ENCODE measurements at regions of chr7 and their contacts with region 1.

Region 1: DNA sequence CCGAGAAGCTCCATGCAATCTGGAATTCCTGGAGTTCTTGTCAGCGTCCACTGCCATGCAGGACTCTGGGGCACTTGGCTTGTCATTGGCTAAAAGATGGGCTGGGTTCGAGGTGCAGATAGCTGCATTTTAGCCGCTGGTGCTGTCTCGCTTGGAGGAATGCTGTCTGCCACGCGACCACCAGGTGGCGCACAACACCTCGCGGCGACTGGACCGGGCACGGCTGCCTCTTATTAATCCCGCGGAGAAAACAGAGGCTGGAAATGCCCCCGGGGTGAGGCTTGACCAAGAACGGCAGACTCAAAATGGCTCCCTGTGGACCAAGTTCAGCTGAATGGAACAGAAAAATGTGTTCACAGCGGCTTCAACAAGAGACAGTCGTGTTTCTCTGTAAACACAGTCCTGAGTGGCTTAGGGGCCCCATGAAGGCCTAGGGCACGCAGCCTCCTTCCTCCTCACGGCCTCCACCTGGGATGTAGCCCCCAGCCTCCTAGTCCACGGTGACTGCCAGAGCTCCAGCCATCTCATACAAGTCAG is 46.2 kb downstream of the AOC1 start:
- H3K4me3 ChIP-seq: no peak overlapping the region
- H3K27ac ChIP-seq: no peak overlapping the region
- H3K4me1 ChIP-seq: no peaks in the 10 kb centered on the region
- CTCF ChIP-seq: peak; percentile 85

Region 2: DNA sequence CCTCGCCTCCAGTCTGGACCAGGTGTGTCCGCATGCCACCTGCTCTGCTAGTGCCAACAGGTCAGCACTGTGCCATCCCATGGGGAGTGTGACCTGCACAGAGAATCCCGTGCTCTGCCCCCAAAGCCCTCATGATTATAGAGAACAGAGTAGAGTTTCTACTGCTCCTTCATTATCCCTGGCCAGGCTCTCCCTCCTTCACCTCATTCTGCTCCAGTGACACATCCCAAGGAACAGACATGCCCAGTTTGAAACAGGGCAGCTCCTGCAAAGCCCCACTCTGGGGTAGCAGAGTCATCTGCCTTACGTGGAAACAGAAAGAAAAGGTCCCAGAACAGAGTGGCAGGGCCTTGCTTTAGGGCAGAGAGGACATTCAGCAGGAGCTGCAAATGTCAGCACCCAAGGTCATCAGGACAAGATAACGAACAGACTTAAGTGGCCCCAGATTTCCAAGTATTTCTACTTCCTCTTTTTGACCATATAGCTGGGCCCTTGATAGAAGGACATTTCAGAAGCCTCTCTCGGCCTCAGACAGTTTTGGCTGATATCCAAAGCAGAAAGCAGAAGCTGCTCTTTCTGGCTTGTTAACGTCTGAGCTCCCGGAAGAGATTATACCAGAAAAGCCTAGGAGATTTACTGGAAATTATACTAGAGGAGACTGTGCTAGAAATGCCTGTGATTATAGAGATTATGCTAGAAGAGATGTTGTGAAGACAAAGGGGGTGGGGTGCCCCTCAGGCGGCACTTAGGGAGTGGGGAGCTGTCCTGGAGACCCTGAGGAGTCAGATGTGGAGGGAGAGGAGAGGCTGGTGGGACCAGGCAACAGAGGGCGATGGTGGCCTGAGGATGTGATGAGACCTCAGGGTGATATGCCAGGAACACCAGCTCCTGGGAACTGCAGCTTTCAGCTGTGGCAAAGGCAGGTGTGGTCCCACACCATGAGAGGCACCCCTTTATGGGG is 110.9 kb before region 1 on chr7:
- CTCF ChIA-PET with region 1: interaction called, 10 read pairs
- POLR2A ChIA-PET with region 1: interaction called, 3 read pairs
- H3K4me3 ChIP-seq: no peak overlapping the region
- H3K27ac ChIP-seq: peak overlapping the region; percentile 34; the same call in 1 of the 2 replicates
- H3K4me1 ChIP-seq: 0 out of 2 replicates have a peak, but pooled peaks cover 3% of the 10 kb centered on the region
- CTCF ChIP-seq: peak; percentile 55; the same call in 1 of the 2 replicates

Region 3: GRCh38 chr7:150876817-150877526 is 21.6 kb before region 1 on chr7:
- CTCF ChIA-PET with region 1: interaction called, 41 read pairs
- POLR2A ChIA-PET with region 1: no interaction called
- H3K4me3 ChIP-seq: peak overlapping the region; percentile 27
- H3K27ac ChIP-seq: no peak overlapping the region
- H3K4me1 ChIP-seq: no peaks in the 10 kb centered on the region
- CTCF ChIP-seq: peak; percentile 56; the same call in 1 of the 2 replicates

Region 4: DNA sequence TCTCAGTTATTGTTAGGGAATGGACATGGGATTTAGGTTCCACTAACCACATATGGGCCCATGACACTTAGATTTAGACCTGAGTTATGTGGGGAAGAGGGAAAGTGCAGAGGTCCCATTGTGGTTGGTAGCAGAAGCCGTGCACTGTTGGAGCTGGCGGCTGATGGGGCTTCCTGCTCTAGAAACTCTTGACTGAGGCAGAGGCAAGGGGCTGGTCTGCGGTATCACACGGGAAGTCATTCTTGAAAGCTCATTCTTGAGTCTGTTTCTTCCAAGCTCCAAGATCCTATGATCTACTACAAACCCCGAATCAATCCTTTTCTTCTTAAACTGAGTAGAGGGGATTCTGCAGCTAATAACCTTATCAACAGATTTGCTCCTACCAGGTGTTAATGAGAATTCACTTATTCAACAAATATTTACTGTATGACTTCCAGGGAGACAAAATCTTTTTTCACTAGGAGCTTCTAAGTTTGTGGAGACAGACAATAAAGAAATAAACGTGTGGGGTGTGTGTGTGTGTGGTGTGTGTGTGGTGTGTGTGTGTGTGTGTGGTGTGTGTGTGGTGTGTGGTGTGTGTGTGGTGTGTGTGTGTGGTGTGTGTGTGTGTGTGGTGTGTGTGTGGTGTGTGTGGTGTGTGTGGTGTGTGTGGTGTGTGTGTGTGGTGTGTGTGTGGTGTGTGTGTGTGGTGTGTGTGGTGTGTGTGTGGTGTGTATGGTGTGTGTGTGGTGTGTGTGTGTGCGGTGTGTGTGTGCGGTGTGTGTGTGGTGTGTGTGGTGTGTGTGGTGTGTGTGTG is 10.9 kb after region 1 on chr7:
- CTCF ChIA-PET with region 1: interaction called, 15 read pairs
- POLR2A ChIA-PET with region 1: no interaction called
- H3K4me3 ChIP-seq: no peak overlapping the region
- H3K27ac ChIP-seq: no peak overlapping the region
- H3K4me1 ChIP-seq: no peaks in the 10 kb centered on the region
- CTCF ChIP-seq: no peak

Region 5: DNA sequence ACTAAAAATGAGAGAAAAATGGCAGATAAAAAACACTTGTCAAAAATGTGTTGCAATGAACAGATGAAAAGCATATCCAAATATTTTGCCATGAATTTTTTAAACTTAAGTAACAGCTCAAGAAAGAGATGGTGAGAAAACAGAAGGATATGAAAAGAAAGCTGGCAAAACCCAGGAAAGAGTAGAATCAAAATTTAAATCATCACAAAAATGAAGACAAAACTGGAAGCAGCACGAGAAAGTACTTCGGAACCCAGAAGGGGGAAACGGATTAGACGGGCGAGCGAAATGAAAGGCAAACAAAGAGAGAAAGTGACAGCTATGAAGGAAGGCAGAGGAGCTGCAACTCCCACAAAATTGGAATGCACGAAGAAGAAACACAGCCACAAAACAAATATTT is 19.4 kb after region 1 on chr7:
- CTCF ChIA-PET with region 1: interaction called, 20 read pairs
- POLR2A ChIA-PET with region 1: no interaction called
- H3K4me3 ChIP-seq: no peak overlapping the region
- H3K27ac ChIP-seq: no peak overlapping the region
- H3K4me1 ChIP-seq: no peaks in the 10 kb centered on the region
- CTCF ChIP-seq: no peak

Region 6: DNA sequence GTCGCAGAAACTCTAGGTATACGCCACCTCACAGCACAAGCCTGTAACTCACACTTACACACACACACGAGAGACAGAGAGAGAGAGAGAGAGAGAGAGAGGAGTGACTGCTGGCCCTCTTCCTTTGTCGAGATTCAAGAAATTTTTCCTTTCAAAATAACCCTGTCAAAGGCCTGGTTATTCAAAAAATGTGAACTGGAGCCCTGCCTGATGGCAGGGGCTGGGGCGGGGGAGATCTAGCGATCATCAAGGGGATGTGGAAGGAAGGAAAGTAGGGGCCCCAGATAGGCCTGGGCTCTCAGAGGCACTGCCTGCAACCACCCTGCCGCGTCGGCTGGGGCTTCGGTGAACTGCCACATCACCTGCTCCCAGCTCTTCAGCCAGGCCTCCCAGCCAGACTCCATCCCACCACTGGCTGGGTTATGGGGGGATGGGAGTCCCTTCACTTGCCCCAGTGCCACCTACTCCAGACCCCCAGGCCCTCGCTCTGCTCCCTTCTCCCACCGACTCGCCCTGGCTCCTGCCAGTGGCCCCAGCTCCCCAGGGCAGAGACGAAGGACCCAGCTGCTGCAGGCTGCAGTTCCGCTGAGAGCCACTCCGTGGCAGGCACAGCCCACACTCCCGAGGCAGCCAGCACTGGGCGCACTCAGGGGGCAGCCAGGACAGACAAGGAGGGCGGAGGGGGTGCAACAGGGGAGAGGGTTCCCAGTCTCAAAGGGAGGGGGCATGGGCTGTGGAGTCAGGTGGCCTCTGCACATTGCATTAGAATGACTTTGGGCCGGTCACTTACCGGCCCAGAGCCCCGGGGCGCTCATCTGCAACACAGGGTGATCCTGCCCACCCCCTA is 64.2 kb after region 1 on chr7:
- CTCF ChIA-PET with region 1: interaction called, 12 read pairs
- POLR2A ChIA-PET with region 1: no interaction called
- H3K4me3 ChIP-seq: no peak overlapping the region
- H3K27ac ChIP-seq: no peak overlapping the region
- H3K4me1 ChIP-seq: no peaks in the 10 kb centered on the region
- CTCF ChIP-seq: peak; percentile 92

Region 7: DNA sequence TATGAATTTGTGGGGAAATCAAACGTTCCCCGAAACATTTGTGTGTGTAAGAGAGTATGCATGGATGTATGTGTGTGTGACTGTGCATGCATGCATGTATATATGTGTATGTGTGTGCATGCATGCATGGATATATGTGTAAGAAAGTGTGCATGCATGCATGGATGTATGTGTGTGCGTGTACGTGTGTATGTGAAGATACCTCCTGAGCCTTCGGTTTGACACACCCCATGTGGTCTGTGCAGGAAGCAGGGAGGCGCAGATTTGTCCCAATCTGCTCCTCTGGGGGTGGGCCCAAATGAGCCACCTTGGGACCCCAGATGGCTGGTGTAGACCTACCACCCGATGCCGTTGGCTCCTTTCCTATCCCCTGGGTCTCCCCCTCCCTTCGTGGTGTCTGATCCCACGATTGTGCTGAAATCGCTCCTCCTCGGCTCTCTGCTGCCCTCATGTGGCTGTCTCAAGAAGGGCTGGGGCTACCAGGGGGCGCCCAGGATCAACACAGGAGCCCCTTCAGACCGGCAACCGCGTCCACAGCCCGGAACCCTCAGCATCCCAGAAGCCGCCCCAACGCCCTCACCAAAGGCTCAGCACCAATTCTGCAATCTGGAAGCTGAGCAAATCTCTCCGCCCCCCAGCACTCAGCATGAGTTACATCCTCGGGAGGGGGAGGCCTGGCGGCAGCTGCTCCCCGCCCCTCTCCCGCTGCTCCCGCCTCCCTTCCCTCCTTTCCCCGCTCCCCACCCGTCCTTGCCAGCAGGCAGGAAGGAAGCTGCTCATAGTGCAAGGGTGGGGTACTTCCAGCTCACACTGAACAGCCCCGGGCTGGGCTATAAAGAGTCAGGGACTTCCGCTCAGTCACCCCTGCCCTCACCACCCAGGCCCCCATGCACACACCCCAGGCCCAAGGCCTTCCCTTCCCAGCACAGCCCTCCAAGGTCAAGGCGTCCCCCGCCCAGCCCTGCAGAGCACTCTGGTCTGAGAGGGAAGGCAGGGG is 90.0 kb after region 1 on chr7:
- CTCF ChIA-PET with region 1: interaction called, 22 read pairs
- POLR2A ChIA-PET with region 1: no interaction called
- H3K4me3 ChIP-seq: no peak overlapping the region
- H3K27ac ChIP-seq: no peak overlapping the region
- H3K4me1 ChIP-seq: no peaks in the 10 kb centered on the region
- CTCF ChIP-seq: peak; percentile 86

Measured in HEK293 (cell line).